AG04449 (cell line): ENCODE measurements at regions of chr10 and their contacts with region 1.

Region 1: GRCh38 chr10:74213571-74214162 is 62.6 kb downstream of the ADK start:
- DNase-seq: no peak
- H3K4me3 ChIP-seq: no peak overlapping the region
- CTCF ChIP-seq: peak; percentile 57

Region 2: DNA sequence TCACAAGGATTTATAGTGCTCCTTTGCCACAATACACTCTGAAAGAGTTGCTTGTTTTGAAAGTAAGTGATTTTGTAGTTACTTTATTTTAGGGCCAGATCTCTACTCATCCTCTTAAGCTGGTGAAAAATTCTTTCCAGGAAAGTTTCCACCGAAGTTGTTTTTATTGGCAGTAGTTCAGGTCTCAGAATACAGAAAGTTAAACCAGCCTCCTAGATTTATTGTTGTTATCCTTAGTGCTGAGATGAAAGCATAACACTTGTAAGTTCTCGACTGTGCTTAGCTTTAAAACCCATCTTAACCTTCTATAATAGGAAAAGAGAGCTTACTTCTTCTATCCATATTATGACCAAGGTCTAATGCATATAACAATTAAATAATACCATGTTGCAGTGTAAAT is 68.5 kb before region 1 on chr10:
- CTCF ChIA-PET with region 1: interaction called, 46 read pairs
- POLR2A ChIA-PET with region 1: no interaction called
- DNase-seq: peak; percentile 51
- H3K4me3 ChIP-seq: no peak overlapping the region
- CTCF ChIP-seq: no peak

Region 3: DNA sequence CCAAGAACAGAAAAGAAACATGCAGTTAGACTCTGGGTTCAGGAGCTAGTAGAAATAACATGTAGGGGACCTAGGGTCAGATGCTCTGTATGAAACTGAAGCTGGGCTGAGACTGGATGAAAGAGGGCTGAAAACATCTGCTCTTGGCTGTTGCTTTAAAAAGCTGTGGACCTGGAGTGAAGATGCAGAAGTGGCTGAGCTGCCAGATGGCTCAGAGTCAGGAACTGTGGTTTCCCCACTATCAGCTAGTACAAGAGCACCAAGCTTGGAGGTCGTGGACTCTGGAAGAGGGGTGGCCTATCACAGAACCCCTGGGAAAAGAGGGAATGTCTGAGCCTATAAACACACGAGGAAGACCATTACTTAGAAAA is 56.8 kb before region 1 on chr10:
- CTCF ChIA-PET with region 1: interaction called, 17 read pairs
- POLR2A ChIA-PET with region 1: no interaction called
- DNase-seq: no peak
- H3K4me3 ChIP-seq: no peak overlapping the region
- CTCF ChIP-seq: no peak

Region 4: DNA sequence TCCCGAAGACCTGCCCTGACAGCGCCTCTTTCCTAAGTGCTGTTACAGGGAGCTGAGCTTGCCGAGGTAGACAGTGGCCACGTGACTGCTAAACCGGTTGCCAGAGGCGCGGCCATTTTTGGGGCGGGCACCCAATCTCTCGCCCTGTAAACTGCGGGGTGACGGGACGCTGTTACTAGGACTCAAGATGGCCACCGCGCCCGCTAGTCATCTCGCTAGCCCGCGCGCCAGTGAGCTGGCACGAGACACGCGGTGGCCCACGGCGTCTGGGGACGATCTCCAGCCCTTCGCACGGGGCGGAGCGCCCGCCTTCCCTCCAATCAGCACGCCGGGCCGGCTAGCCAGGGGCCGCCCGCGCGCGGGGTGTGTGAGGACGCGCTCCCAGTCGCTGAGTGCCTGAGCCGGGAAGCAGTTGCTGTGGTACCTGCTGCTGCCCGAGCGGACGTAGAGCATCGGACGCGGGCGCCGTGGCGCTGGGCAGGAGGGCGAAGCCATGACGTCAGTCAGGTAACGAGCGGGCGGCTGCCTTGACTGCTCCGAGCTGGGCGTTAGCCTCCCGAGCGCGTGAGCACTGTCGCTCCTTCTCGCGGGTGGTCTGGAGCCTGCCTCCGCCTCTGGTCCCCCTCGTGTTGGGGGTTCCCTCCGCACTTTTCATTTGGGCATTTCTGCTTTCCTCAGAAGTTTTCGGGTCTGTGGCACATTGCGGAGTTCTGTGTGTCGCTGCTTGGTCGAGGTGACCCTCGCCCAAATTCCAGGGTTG is 37.1 kb before region 1 on chr10:
- CTCF ChIA-PET with region 1: interaction called, 10 read pairs
- POLR2A ChIA-PET with region 1: no interaction called
- DNase-seq: peak; percentile 49
- H3K4me3 ChIP-seq: peak overlapping the region; percentile 89
- CTCF ChIP-seq: no peak

Region 5: GRCh38 chr10:74227697-74228424 is 14.2 kb after region 1 on chr10:
- CTCF ChIA-PET with region 1: interaction called, 19 read pairs
- POLR2A ChIA-PET with region 1: no interaction called
- DNase-seq: no peak
- H3K4me3 ChIP-seq: no peak overlapping the region
- CTCF ChIP-seq: no peak

Region 6: DNA sequence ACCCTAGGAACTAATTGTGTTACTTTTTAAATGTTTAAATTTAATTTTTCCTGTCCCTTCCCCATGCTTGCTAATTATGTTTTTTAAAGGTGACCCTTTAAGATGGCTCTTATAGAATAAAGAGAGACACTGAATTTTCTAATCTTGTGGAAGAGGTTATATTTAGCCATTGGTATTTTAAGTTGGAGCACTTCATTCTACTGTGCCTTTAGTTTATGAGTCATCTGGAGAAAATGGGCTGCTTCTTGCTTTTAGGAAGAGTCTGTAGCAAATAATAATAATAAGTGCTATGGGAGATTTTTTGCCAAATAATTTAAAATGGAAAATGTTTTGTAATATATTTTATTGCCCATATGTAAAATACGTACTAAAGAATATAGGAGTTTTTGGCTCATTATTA is 77.0 kb after region 1 on chr10:
- CTCF ChIA-PET with region 1: no interaction called
- POLR2A ChIA-PET with region 1: no interaction called
- DNase-seq: peak; percentile 33
- H3K4me3 ChIP-seq: no peak overlapping the region
- CTCF ChIP-seq: no peak